B cell (primary cell): ENCODE measurements at regions of chr21 and their contacts with region 1.

Region 1: GRCh38 chr21:31659536-31660258 is at the start of gene SOD1:
- DNase-seq: peak; percentile 95
- ATAC-seq: peak; percentile 97
- H3K4me3 ChIP-seq: peak within 1 kb of the TSS; percentile 68 to 84 (median 74)
- H3K4me3 Mint-ChIP-seq: peak within 1 kb of the TSS; percentile 97
- H3K27ac ChIP-seq: peak within 1 kb of the TSS; percentile 38 to 74
- H3K27ac Mint-ChIP-seq: peak within 1 kb of the TSS; percentile 99
- H3K4me1 ChIP-seq: peaks cover 21 to 23% of the 10 kb centered on the region in 2 donors
- H3K4me1 Mint-ChIP-seq: peaks cover 56% of the 10 kb centered on the region
- H3K27me3 ChIP-seq: no peaks in the 10 kb centered on the region
- H3K27me3 Mint-ChIP-seq: no peaks in the 10 kb centered on the region
- CTCF ChIP-seq: no peak
- total RNA-seq, gene SOD1: 81.4 and 91.2 TPM in 2 replicates

Region 2: GRCh38 chr21:31558962-31559367 is 100.7 kb before region 1 on chr21:
- CTCF ChIA-PET with region 1: no interaction called
- POLR2A ChIA-PET with region 1: no interaction called
- intact Hi-C with region 1: loop called (anchors 2 kb)
- DNase-seq: peak; percentile 93
- ATAC-seq: peak; percentile 88
- H3K4me3 ChIP-seq: peak overlapping the region in 4 of 5 experiments; percentile 55 to 78 (median 59)
- H3K4me3 Mint-ChIP-seq: peak overlapping the region; percentile 95
- H3K27ac ChIP-seq: no peak overlapping the region
- H3K27ac Mint-ChIP-seq: no peak overlapping the region
- H3K4me1 ChIP-seq: peaks cover 20% of the 10 kb centered on the region in 2 donors
- H3K4me1 Mint-ChIP-seq: peaks cover 22% of the 10 kb centered on the region
- H3K27me3 ChIP-seq: peaks cover 0 to 24% (median 12%) of the 10 kb centered on the region in 4 experiments
- H3K27me3 Mint-ChIP-seq: peaks cover 26% of the 10 kb centered on the region
- CTCF ChIP-seq: peak; percentile 34

Region 3: GRCh38 chr21:31772674-31773555 is 113.2 kb after region 1 on chr21:
- CTCF ChIA-PET with region 1: no interaction called
- POLR2A ChIA-PET with region 1: no interaction called
- intact Hi-C with region 1: loop called (anchors 1 kb)
- DNase-seq: peak; percentile 82
- ATAC-seq: peak; percentile 85
- H3K4me3 ChIP-seq: peak overlapping the region in 3 of 5 experiments; percentile 6 to 34 (median 20)
- H3K4me3 Mint-ChIP-seq: peak overlapping the region; percentile 64
- H3K27ac ChIP-seq: peak overlapping the region; percentile 94 to 96
- H3K27ac Mint-ChIP-seq: peak overlapping the region; percentile 94
- H3K4me1 ChIP-seq: peaks cover 51 to 53% of the 10 kb centered on the region in 2 donors
- H3K4me1 Mint-ChIP-seq: peaks cover 51% of the 10 kb centered on the region
- H3K27me3 ChIP-seq: no peaks in the 10 kb centered on the region
- H3K27me3 Mint-ChIP-seq: no peaks in the 10 kb centered on the region
- CTCF ChIP-seq: no peak

Region 4: DNA sequence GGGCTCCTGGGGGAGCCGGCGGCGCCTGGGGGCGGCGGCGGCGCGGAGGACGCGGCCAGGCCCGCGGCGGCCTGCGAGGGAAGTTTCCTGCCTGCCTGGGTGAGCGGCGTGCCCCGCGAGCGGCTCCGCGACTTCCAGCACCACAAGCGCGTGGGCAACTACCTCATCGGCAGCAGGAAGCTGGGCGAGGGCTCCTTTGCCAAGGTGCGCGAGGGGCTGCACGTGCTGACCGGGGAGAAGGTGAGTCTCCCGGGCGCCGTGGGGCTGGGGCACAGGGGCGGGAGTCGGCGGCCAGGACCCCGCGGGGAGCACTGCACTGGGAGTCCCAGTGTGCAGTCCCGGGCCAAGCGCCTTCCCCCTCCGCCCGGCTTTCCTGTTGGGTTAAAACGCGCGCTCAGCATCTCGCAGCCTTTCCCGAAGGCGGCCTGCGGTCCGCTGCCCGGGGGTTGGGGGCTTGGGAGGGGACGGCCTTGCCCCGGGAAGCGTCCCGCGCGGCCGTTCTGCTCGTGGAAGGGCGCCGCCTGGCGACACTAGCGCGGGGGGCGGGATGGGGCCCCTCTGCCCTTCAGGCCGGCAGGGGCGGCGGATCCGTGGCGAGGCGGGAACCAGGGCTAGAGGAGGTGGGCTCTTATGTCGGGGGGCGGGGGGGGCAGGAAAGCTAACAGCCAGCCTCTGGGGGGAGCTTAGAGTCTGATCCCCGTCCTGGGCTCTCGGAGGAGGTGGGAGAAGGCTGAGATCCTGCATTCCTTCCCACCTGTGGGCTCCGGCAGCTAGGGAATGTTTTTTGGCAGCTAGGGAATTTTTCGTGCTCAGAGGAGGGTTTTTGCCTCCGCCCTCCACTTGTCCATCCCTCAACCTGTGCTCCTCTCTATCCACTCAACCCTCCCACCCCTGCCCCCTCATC is 214.3 kb after region 1 on chr21:
- CTCF ChIA-PET with region 1: no interaction called
- POLR2A ChIA-PET with region 1: no interaction called
- intact Hi-C with region 1: loop called (anchors 5 kb)
- DNase-seq: peak; percentile 58
- ATAC-seq: peak; percentile 57
- H3K4me3 ChIP-seq: peak overlapping the region in 4 of 5 experiments; percentile 32 to 65 (median 50)
- H3K4me3 Mint-ChIP-seq: peak overlapping the region; percentile 57
- H3K27ac ChIP-seq: no peak overlapping the region
- H3K27ac Mint-ChIP-seq: no peak overlapping the region
- H3K4me1 ChIP-seq: peaks cover 14 to 22% of the 10 kb centered on the region in 2 donors
- H3K4me1 Mint-ChIP-seq: peaks cover 10% of the 10 kb centered on the region
- H3K27me3 ChIP-seq: peaks cover 0 to 69% (median 24%) of the 10 kb centered on the region in 4 experiments
- H3K27me3 Mint-ChIP-seq: peaks cover 55% of the 10 kb centered on the region
- CTCF ChIP-seq: peak; percentile 64

Region 5: DNA sequence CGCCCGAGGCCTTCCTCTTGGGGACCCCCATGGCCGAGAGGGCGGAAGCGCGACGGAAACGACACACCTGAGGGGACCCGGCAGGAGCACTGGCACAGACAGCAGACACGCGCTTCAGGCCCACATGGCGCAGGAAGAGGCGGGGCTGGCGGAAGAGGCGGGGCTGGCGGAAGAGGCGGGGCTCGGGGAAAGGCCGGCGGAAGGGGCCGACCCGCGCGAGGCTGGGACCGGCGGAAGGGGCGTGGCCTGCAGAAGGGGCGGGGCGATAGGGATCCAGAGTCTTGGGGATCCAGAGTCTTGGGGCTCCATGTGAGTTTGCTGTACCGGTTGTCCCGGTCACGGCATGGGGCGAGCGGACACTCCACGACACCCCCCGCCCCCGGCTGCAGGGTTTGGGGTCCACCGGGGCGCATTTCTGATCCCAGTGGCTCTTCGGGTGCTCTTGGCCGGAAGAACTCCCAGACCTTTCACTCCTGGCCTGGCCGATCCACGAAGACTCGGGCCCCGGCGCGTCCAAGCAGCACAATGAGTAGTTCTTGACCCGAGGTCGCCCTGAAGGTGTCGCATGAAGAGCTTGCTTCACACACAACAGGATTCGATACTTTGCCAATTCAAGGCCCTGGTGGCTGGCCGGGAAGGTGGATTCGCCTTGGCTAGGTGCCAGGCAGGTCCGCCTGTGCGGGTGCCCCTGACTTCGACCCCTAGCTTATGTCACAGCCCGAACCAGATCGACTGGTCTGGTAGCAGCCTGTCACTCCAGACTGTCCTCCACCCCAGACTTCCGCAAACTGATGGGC is 733.4 kb after region 1 on chr21 and contains the start of gene URB1:
- CTCF ChIA-PET with region 1: no interaction called
- POLR2A ChIA-PET with region 1: no interaction called
- intact Hi-C with region 1: loop called (anchors 5 kb)
- DNase-seq: peak; percentile 93
- ATAC-seq: peak; percentile 96
- H3K4me3 ChIP-seq: peak within 1 kb of the TSS; percentile 67 to 99 (median 95)
- H3K4me3 Mint-ChIP-seq: peak within 1 kb of the TSS; percentile 92
- H3K27ac ChIP-seq: peak within 1 kb of the TSS; percentile 74 to 90
- H3K27ac Mint-ChIP-seq: peak within 1 kb of the TSS; percentile 90
- H3K4me1 ChIP-seq: peaks cover 18 to 24% of the 10 kb centered on the region in 2 donors
- H3K4me1 Mint-ChIP-seq: peaks cover 39% of the 10 kb centered on the region
- H3K27me3 ChIP-seq: peaks cover 0 to 11% (median 6%) of the 10 kb centered on the region in 4 experiments
- H3K27me3 Mint-ChIP-seq: peaks cover 11% of the 10 kb centered on the region
- CTCF ChIP-seq: no peak
- total RNA-seq, gene URB1: 14.9 and 15.2 TPM in 2 replicates

Region 6: DNA sequence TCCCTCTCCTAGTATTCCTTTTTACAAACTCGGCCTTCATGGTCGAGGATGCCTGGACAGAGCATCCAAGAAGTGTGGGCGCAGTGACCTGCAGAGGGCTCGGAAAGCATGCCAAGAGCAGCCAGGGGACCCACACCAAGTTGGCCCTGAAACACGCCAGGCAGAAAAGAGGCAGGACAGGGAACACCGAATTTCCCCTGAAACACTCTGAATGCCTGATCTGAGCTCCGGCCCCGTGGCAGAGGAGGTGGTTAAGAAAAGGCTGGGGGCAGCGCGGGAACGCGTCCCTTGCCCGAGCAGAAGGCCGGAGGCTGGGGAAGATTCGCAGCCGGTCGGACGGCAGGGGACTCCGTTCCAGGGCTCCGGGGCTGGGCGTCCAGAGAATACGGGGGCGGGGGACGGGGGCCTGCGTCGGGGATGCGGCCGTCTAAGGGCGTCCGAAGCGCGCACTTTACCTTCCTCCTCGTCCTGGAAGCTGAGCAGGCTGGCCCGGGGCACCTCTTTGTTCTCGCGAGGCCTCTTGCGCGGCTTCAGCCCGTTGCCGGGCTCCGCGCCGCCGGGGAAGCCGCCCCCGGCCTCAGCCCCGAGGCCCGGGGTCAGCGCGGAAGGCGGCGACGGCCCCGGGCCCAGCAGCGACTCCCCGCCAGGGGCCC is 1111.3 kb after region 1 on chr21:
- CTCF ChIA-PET with region 1: no interaction called
- POLR2A ChIA-PET with region 1: no interaction called
- intact Hi-C with region 1: loop called (anchors 5 kb)
- DNase-seq: no peak
- ATAC-seq: peak; percentile 40
- H3K4me3 ChIP-seq: peak overlapping the region; percentile 65 to 84 (median 78)
- H3K4me3 Mint-ChIP-seq: peak overlapping the region; percentile 96
- H3K27ac ChIP-seq: peak overlapping the region; percentile 48 to 77
- H3K27ac Mint-ChIP-seq: peak overlapping the region; percentile 93
- H3K4me1 ChIP-seq: peaks cover 12 to 19% of the 10 kb centered on the region in 2 donors
- H3K4me1 Mint-ChIP-seq: peaks cover 50% of the 10 kb centered on the region
- H3K27me3 ChIP-seq: no peaks in the 10 kb centered on the region
- H3K27me3 Mint-ChIP-seq: no peaks in the 10 kb centered on the region
- CTCF ChIP-seq: no peak